K562 (cell line): ENCODE measurements at regions of chr12 and their contacts with region 1.

Region 1: DNA sequence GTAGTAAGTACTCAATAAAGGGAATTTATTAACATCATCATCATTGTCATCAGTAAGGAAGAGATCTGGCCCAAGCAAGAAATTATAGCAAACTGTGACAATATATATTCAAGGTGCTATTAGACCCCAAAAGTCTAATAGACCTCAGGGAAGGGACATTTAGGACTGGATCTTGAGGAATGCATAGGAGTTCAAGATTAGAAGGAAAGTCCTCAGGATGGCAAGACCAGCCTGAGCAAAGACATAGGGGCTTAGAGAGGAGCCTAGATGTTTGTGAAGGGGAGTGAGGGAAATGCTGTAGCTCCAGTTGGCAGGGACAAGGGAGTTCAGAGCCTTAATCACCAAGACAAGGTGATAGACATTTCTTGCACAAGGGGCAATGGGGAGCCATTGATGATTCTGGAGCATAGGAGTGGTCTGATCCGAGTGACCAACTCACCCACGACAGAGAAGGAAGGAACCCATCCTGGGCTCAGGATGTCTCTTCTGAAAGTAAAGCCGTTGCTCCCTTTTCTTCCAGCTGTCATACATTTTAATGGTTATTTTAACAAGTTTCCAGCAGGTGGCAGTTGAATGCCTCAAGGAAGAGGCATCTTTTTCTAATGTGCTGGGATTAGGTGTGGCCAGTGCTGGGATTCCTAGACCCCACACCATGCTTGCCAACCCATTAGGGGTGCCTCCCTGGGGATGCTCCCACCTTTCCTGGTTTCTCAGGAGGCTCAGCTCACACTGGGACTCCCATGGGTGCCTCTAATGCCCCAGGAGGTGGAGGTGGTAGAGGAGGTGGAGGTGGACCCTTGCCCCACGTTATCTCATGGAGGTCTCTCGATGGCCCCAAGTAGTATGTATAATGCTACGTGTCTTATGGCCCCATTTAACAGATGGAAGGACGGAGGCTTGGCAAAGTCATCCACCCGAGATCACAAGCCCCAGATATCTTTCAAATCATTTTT is 37.8 kb downstream of the PHETA1 start:
- DNase-seq: peak; percentile 40 to 68 (median 50)
- ATAC-seq: peak; percentile 87
- H3K4me3 ChIP-seq: no peak overlapping the region
- H3K27ac ChIP-seq: no peak overlapping the region
- H3K4me1 ChIP-seq: no peaks in the 10 kb centered on the region; a peak in 1 of 5 replicates
- H3K27me3 ChIP-seq: peaks cover 18 to 64% of the 10 kb centered on the region in 2 experiments; a peak in 4 of 5 replicates
- CTCF ChIP-seq: peak; percentile 59 to 75 (median 71)
- EP300 ChIP-seq: no peak
- POLR2A ChIP-seq: no peak
- RAD21 ChIP-seq: peak; percentile 50 to 70

Region 2: DNA sequence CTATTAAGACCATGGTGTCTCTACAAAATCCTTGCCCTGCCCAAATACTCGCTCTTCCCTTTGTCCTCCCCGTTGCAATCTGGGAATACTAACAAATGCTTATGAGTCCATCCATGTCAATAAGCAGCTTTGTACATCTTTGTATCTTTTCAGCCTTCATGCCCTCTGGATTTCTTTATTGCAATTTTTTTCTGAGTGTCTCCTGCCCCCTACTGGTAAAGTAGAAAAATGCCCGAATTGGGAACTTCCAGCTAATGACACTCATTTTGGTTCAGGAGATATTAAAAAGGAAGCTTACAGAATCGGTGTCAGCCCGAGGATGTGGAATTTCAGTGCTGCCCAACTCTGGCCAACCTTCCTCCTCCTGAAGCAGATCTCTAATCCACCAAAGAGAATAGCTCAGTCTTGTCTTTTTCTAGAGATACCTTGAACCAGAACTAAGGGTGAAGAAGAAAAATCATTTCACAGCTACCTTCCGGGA is 120.6 kb after region 1 on chr12:
- CTCF ChIA-PET with region 1: interaction called, 9 read pairs
- POLR2A ChIA-PET with region 1: interaction called, 4 read pairs
- in situ Hi-C with region 1: no loop called
- intact Hi-C with region 1: loop called (anchors 5 kb)
- DNase-seq: peak in 3 of 4 experiments; percentile 36 to 63 (median 46)
- ATAC-seq: peak; percentile 32
- H3K4me3 ChIP-seq: no peak overlapping the region
- H3K27ac ChIP-seq: no peak overlapping the region
- H3K4me1 ChIP-seq: peaks cover 0 to 10% of the 10 kb centered on the region in 2 experiments; a peak in 2 of 5 replicates
- H3K27me3 ChIP-seq: no peaks in the 10 kb centered on the region
- CTCF ChIP-seq: peak; percentile 70 to 88 (median 80); a peak in 5 of 6 replicates
- EP300 ChIP-seq: no peak
- POLR2A ChIP-seq: peak; percentile 12
- RAD21 ChIP-seq: peak; percentile 77 to 80

Region 3: DNA sequence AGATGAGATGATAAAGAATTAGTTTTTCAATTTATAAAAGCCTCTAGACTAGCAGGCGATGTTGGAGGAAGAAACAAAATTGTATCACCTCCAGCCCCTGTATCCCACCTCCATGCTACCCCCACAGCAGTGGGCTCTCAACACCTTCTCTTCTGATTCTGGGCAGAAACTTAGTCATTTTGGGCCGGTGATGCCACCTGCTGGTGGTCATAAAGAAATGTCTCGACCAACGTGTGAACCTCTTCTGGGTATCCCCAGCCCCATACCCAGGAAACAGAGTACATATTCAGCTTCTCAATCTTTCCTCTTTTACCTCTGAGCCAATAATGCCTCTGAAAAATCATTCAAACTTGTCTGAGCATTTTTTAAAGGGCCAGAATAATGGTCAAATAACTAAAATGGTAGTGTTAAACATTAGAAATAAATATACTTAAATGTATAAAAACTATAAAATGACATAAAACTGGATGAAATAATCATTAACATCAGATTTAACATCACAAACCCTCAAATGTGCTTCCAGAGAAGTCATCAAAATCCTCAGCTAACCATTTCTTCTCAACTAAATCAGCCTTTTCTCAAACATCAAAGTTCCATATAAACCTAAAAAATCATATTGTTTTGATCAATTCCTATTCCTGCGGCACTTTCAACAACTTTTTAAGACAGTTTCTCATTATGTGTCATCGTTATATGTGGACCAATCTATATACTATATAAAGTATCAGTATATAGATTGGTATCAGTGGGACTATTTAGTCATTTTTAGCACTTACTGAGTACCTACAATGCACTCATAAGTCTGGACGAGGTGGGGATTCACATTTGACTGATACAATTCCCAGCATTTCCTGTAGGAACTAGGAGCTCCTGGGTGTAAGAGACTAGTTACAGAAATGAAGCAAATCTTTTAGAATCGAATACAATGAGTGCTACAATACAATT is 198.6 kb after region 1 on chr12:
- CTCF ChIA-PET with region 1: no interaction called
- POLR2A ChIA-PET with region 1: no interaction called
- in situ Hi-C with region 1: no loop called
- intact Hi-C with region 1: loop called (anchors 10 kb)
- DNase-seq: peak; percentile 75 to 80 (median 76)
- ATAC-seq: peak; percentile 92
- H3K4me3 ChIP-seq: no peak overlapping the region
- H3K27ac ChIP-seq: no peak overlapping the region
- H3K4me1 ChIP-seq: no peaks in the 10 kb centered on the region
- H3K27me3 ChIP-seq: no peaks in the 10 kb centered on the region
- CTCF ChIP-seq: peak; percentile 67 to 76 (median 68)
- EP300 ChIP-seq: no peak
- POLR2A ChIP-seq: no peak
- RAD21 ChIP-seq: peak; percentile 37 to 68; a peak in 3 of 4 replicates